Vagina (tissue), 2 donors: ENCODE measurements at regions of chr21 and their contacts with region 1.

Region 1: DNA sequence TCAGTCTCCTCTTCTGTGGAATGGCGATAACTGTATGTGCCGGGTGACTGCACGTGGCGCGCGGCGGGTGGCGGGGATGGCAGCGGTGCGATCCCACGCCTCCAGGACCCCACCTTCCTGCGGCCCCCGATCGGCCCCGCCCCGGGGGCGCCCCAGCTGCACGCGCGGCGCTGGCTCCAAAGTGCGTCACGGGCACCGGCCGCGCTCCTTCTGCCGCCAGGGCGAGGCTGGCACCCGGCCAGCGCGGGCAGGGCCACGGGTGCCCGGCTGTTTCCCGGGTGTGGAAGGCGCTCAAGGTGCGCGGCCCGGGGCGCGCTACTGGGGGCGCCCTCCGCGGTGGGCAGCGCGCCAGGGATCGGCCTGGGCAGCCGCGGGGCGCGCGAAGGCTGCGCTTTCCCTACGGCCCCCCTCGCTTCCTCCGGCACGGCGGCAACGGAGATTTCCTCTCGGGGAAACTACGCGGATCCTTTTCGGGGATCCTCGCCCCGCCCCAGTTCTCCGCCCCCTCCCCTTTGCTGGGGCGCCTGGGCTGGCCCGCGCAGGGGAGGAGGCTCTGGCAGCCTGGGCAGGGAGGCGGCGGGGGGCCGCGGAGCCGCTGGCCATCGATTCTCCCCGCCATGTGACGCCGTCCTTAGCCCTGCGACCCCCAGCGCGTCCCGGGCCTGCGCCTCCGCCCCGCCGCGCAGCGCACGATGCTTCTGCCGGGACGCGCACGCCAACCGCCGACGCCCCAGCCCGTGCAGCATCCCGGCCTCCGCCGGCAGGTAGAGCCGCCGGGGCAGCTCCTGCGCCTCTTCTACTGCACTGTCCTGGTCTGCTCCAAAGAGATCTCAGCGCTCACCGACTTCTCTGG is at the start of gene EVA1C:
- DNase-seq: no peak
- H3K4me3 ChIP-seq: peak within 1 kb of the TSS; percentile 67 to 83
- H3K27ac ChIP-seq: peak within 1 kb of the TSS; percentile 99
- H3K4me1 ChIP-seq: peaks cover 52% of the 10 kb centered on the region
- H3K27me3 ChIP-seq: no peaks in the 10 kb centered on the region
- CTCF ChIP-seq: peak in 1 of 3 experiments; percentile 5
- POLR2A ChIP-seq: peak in 1 of 2 donors; percentile 48
- total RNA-seq, gene EVA1C: 66.5 TPM

Region 2: DNA sequence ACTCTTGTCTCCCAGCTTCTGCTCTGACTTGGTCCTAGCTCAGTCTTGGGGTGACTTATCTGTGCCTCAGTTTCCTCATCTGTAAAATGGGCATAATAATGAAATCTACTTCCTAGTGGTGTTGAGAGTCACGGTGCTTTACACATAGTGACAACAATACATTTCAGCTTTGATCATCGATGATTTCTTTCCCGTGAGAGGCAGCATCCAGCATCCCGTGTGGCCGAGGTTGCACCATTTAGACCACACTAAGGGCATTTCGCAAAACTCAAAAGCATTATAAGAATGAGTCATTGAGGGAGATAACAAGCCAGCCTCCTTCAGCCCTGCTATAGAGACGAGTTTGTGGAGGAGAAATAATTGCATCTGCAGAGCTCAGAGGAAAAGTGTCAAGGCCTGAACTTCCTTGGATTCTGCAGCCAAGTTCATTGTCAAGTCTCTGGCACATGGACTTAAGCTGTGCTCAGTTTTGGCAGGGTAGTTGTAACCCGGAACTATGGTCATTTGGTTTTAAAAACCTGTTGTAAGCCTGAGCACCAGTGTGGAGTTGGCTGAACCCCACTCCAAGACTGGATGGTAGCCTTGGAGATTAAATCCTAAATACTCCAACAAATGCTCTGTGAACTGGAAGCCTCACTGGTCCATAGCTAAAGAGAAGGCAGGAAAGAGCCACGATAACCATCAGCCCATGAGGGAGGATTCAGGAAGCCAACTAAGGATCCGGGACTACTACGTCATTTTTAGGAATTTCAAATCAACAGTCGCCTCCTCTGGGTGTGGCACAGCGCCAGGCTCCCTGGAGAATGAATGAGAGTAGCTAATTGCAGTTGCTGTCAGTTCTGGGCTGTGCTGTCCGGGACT is 108.7 kb after region 1 on chr21:
- intact Hi-C with region 1: loop called (anchors 5 kb)
- DNase-seq: peak in 1 of 2 donors; percentile 95
- H3K4me3 ChIP-seq: no peak overlapping the region
- H3K27ac ChIP-seq: peak overlapping the region; percentile 77
- H3K4me1 ChIP-seq: peaks cover 74% of the 10 kb centered on the region
- H3K27me3 ChIP-seq: no peaks in the 10 kb centered on the region
- CTCF ChIP-seq: no peak
- POLR2A ChIP-seq: no peak

Region 3: DNA sequence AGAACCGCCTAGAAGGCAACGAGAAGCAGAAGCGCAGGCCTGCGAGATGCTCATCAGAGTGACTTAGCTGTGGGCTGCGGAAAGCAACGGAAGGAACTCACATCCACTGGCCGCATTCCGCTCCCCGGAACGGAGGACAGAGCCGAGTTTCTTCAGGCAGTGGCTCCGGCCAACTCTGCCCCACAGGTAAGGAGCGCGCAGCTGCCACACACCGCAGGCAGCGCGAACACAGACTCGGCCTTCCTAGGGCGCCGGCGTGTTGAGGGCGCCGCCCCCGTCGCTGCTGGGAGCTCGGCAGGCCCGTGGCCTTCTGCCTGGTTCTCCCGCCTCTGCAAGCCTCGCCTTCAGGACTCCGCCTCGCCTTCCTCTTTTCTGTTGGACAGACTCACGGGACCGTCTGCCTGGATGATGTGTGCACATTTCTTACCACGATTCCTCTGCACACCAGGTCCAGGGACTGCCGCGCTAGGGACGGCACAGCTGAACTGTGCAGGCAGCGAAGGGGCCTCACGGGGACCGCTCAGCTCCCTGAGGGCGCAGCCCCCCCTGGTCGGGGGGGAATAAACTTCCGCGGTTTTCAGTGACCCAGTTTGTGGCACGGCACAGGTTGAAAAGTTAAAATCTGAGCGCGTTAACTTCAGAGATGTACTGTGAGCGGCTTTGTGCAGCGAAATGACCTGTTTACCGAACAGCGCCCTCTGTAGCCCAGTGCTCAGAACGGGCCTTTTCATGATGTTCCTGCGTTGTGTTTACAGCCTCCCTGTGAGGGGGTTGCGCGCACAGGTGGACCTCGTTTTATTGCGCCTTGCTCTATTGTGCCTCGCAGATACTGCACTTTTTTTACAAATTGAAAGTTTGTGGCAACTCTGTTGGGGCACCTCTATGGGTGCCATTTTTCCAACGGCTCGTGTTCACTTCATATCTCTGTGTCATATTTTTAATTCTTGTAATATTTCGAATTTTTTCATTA is 157.2 kb after region 1 on chr21:
- intact Hi-C with region 1: loop called (anchors 5 kb)
- DNase-seq: no peak
- H3K4me3 ChIP-seq: peak overlapping the region; percentile 56 to 71
- H3K27ac ChIP-seq: peak overlapping the region; percentile 88
- H3K4me1 ChIP-seq: peaks cover 5% of the 10 kb centered on the region
- H3K27me3 ChIP-seq: no peaks in the 10 kb centered on the region
- CTCF ChIP-seq: peak; percentile 42 to 75 (median 55)
- POLR2A ChIP-seq: no peak